ENCODE measurements at regions of chr10 and their contacts with region 1.

Region 1: DNA sequence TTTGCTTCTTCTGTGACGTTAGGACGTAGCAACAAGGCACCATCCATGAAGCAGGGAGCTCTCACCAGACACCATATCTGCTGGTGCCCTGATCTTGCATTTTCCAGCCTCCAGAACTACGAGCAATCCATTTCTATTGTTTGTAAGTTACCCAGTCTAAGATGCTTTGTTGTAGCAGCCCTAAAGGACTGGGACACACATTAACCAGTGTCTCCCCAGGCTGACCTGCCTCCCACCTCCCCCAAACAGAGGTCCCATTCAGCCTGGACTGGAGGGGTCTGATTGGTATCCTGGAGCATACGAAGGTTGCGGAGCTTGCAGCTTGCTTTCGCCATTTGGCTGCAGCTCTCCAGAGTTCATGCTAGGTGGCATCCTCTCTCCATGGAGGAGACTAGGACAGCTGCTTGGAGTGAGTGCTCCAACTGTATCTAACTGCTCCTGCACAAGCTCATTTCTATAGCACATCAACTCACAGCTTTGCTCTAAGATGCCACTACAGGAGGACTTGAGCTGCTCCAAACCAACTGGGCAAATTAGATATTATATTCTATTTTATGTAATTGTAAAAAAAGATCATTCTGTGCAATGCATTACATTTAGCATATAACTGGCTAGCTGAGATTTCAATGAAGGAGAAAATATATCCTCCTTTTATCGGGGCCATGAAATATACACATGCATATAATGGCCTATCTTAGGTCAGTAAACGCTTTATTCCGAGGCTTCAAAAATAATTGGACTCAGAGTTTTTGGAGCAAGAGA is 8.0 kb upstream of the GRK5 start:
- DNase-seq: peak; percentile 18 to 75 (median 38)
- ATAC-seq: peak; percentile 94
- H3K4me3 ChIP-seq: no peak overlapping the region
- H3K27ac ChIP-seq: no peak overlapping the region
- H3K4me1 ChIP-seq: peaks cover 0 to 9% of the 10 kb centered on the region in 2 experiments; a peak in 2 of 5 replicates
- H3K27me3 ChIP-seq: no peaks in the 10 kb centered on the region
- CTCF ChIP-seq: peak; percentile 76 to 82 (median 78)
- EP300 ChIP-seq: no peak
- POLR2A ChIP-seq: no peak
- RAD21 ChIP-seq: peak; percentile 85 to 88

Region 2: DNA sequence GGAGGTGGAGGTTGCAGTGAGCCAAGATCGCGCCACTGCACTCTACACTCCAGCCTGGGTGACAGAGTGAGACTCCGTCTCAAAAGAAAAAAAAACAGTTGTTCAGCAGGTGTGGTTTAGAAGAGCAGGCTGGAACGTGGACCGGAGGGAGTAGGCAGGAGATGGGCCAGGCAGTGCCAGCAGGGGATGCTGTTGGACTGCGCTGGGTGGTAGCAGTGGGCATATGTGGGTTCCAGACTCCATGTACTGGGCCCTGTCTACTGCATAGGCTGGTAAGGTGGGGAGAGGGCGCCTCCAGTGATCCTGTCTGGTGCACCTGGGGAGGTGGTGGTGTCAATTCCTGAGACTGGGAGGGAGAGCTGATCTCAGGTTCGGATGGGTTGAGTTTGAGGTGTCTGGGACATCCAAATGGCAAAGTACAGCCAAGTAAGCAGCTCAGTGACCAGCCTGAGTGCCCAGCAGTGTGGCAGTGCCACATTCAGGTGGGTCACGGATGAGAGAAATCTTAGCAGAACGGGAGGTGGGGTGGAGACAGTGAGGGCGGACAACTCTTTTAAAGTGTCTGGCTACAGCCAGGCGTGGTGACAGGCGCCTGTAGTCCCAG is 59.8 kb before region 1 on chr10:
- CTCF ChIA-PET with region 1: no interaction called
- POLR2A ChIA-PET with region 1: no interaction called
- in situ Hi-C with region 1: no loop called
- intact Hi-C with region 1: loop called (anchors 2 kb)
- DNase-seq: peak in 2 of 4 experiments; percentile 23 to 25
- ATAC-seq: peak; percentile 78
- H3K4me3 ChIP-seq: no peak overlapping the region
- H3K27ac ChIP-seq: no peak overlapping the region
- H3K4me1 ChIP-seq: no peaks in the 10 kb centered on the region
- H3K27me3 ChIP-seq: no peaks in the 10 kb centered on the region
- CTCF ChIP-seq: peak; percentile 49 to 60 (median 55); a peak in 5 of 6 replicates
- EP300 ChIP-seq: no peak
- POLR2A ChIP-seq: peak; percentile 37; the same call in 1 of the 2 replicates
- RAD21 ChIP-seq: peak; percentile 22 to 51; a peak in 3 of 4 replicates

Region 3: DNA sequence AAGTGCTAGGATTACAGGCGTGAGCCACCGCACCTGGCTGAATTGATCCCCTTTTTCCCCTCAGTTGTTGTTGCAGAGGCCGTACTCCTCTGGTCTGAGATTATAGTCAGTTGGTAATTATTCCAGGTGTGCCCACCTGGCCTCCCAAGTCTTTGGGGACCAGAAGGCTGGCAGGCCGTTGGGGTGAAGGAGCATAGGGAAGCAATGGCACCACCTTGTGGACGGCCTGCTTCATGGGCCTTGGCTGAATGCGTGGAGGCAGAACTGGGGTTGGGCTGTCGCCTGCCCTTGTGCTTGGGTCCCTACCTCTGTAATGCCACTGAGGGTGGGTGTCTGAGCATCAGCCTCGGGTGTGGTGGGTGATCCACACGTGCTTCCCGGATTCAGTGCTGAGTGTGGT is 217.4 kb after region 1 on chr10:
- CTCF ChIA-PET with region 1: interaction called, 21 read pairs
- POLR2A ChIA-PET with region 1: no interaction called
- in situ Hi-C with region 1: loop called (anchors 5 kb)
- intact Hi-C with region 1: loop called (anchors 2 kb)
- DNase-seq: peak; percentile 60 to 72 (median 66)
- ATAC-seq: peak; percentile 90
- H3K4me3 ChIP-seq: no peak overlapping the region
- H3K27ac ChIP-seq: no peak overlapping the region
- H3K4me1 ChIP-seq: peaks cover 0 to 4% of the 10 kb centered on the region in 2 experiments; a peak in 1 of 5 replicates
- H3K27me3 ChIP-seq: peaks cover 0 to 25% of the 10 kb centered on the region in 2 experiments; a peak in 3 of 5 replicates
- CTCF ChIP-seq: peak; percentile 72 to 77 (median 75)
- EP300 ChIP-seq: no peak
- POLR2A ChIP-seq: no peak
- RAD21 ChIP-seq: peak; percentile 66 to 87

Region 4: GRCh38 chr10:119445311-119445934 is 246.0 kb after region 1 on chr10:
- CTCF ChIA-PET with region 1: interaction called, 9 read pairs
- POLR2A ChIA-PET with region 1: no interaction called
- in situ Hi-C with region 1: no loop called
- intact Hi-C with region 1: loop called (anchors 2 kb)
- DNase-seq: peak; percentile 76 to 83 (median 82)
- ATAC-seq: peak; percentile 92
- H3K4me3 ChIP-seq: no peak overlapping the region
- H3K27ac ChIP-seq: no peak overlapping the region
- H3K4me1 ChIP-seq: peaks cover 0 to 17% of the 10 kb centered on the region in 2 experiments; a peak in 2 of 5 replicates
- H3K27me3 ChIP-seq: peaks cover 0 to 59% of the 10 kb centered on the region in 2 experiments; a peak in 3 of 5 replicates
- CTCF ChIP-seq: peak; percentile 78 to 81 (median 78)
- EP300 ChIP-seq: no peak
- POLR2A ChIP-seq: no peak
- RAD21 ChIP-seq: peak; percentile 65 to 74

Region 5: GRCh38 chr10:119602241-119603095 is 403.1 kb after region 1 on chr10:
- CTCF ChIA-PET with region 1: no interaction called
- POLR2A ChIA-PET with region 1: no interaction called
- in situ Hi-C with region 1: no loop called
- intact Hi-C with region 1: loop called (anchors 5 kb)
- DNase-seq: peak in 3 of 4 experiments; percentile 11 to 65 (median 46)
- ATAC-seq: peak; percentile 95
- H3K4me3 ChIP-seq: no peak overlapping the region
- H3K27ac ChIP-seq: no peak overlapping the region
- H3K4me1 ChIP-seq: no peaks in the 10 kb centered on the region; a peak in 2 of 5 replicates
- H3K27me3 ChIP-seq: no peaks in the 10 kb centered on the region
- CTCF ChIP-seq: peak; percentile 55 to 65 (median 65)
- EP300 ChIP-seq: no peak
- POLR2A ChIP-seq: no peak
- RAD21 ChIP-seq: peak in 1 of 2 experiments; percentile 47; a peak in 2 of 4 replicates

Region 6: GRCh38 chr10:119686439-119687191 is 487.2 kb after region 1 on chr10:
- CTCF ChIA-PET with region 1: no interaction called
- POLR2A ChIA-PET with region 1: no interaction called
- in situ Hi-C with region 1: no loop called
- intact Hi-C with region 1: no loop called
- DNase-seq: peak; percentile 61 to 83 (median 66)
- ATAC-seq: peak; percentile 90
- H3K4me3 ChIP-seq: no peak overlapping the region
- H3K27ac ChIP-seq: no peak overlapping the region
- H3K4me1 ChIP-seq: peaks cover 9 to 10% of the 10 kb centered on the region in 2 experiments; a peak in 4 of 5 replicates
- H3K27me3 ChIP-seq: no peaks in the 10 kb centered on the region
- CTCF ChIP-seq: peak; percentile 71 to 80 (median 74)
- EP300 ChIP-seq: no peak
- POLR2A ChIP-seq: no peak
- RAD21 ChIP-seq: peak; percentile 77 to 82